Cardiac septum (tissue), 1 donor: ENCODE measurements at regions of chr11 and their contacts with region 1.

Region 1: DNA sequence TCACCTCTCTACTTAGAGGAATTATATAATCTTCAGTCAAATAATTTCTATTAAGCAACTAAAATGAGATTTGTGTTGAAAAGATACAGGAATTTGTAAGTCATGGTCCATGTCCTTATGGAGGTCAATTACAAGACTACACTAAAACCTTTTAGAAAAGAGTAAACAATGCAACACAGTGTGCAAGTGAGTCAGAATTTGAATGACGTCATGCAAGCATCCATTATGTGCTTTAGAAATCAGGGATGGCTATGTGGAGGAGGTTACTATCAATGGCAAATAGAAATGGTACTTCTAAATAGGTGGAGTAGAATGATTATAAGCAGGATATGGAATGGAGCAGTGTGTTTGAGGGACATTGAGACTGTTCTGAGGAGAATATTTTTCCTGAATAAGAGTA is 16.6 kb downstream of the OR10D3 start:
- DNase-seq: no peak

Region 2: DNA sequence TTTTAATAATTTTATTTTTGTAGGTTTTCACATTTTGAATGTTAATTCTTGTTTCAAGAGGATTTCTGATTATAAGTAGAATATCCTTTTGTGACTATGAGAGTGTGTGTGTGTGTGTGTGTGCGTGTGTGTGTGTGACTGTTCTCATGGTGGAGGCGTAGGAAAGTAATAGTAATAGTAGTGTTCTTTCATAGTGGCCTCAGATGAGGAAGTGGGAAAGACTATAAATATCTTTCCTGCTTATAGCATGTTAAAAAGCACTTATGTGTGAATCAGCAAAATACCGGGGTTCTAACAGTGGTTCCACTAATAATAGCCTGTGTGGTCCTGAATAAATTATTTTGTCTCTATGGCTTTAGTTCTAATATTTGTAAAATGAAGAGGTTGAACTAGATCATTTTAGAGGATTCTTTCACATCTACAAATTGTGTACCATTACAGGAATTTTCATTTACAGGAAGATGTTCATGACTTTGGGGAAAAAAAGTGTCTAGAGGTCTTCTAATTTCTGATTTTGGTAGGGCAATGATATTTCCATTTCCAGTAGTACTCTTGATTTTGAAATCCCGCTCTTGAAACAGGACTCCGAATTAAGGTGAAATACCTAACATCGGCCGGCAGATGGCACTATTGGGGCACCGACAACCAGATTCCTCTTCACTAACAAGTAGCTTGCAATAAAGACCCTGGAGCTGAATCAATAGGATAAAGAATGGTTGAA is 128.6 kb before region 1 on chr11:
- intact Hi-C with region 1: loop called (anchors 10 kb)
- DNase-seq: no peak